CD4-positive, alpha-beta T cell (primary cell): ENCODE measurements at regions of chr4 and their contacts with region 1.

Region 1: GRCh38 chr4:78644744-78645330 is 93.3 kb downstream of the ANXA3 start:
- DNase-seq: peak; percentile 12 to 74 (median 34)
- ATAC-seq: peak; percentile 99
- H3K4me3 ChIP-seq: no peak overlapping the region
- H3K4me3 Mint-ChIP-seq: no peak overlapping the region
- H3K27ac ChIP-seq: no peak overlapping the region
- H3K27ac Mint-ChIP-seq: no peak overlapping the region
- H3K4me1 ChIP-seq: no peaks in the 10 kb centered on the region
- H3K4me1 Mint-ChIP-seq: peaks cover 5% of the 10 kb centered on the region
- H3K27me3 ChIP-seq: no peaks in the 10 kb centered on the region
- H3K27me3 Mint-ChIP-seq: no peaks in the 10 kb centered on the region
- CTCF ChIP-seq: peak; percentile 80

Region 2: GRCh38 chr4:78517050-78517652 is 127.7 kb before region 1 on chr4:
- CTCF ChIA-PET with region 1: no interaction called
- POLR2A ChIA-PET with region 1: no interaction called
- intact Hi-C with region 1: no loop called
- DNase-seq: peak in 2 of 14 experiments; percentile 3 to 7
- ATAC-seq: no peak
- H3K4me3 ChIP-seq: no peak overlapping the region
- H3K4me3 Mint-ChIP-seq: no peak overlapping the region
- H3K27ac ChIP-seq: no peak overlapping the region
- H3K27ac Mint-ChIP-seq: no peak overlapping the region
- H3K4me1 ChIP-seq: no peaks in the 10 kb centered on the region
- H3K4me1 Mint-ChIP-seq: no peaks in the 10 kb centered on the region
- H3K27me3 ChIP-seq: no peaks in the 10 kb centered on the region
- H3K27me3 Mint-ChIP-seq: no peaks in the 10 kb centered on the region
- CTCF ChIP-seq: peak; percentile 35

Region 3: GRCh38 chr4:78656968-78657445 is 12.2 kb after region 1 on chr4:
- CTCF ChIA-PET with region 1: interaction called, 17 read pairs
- POLR2A ChIA-PET with region 1: interaction called, 6 read pairs
- intact Hi-C with region 1: no loop called
- DNase-seq: peak in 5 of 14 experiments; percentile 3 to 43 (median 35)
- ATAC-seq: peak; percentile 54
- H3K4me3 ChIP-seq: peak overlapping the region; percentile 22
- H3K4me3 Mint-ChIP-seq: peak overlapping the region; percentile 64
- H3K27ac ChIP-seq: no peak overlapping the region
- H3K27ac Mint-ChIP-seq: peak overlapping the region; percentile 16
- H3K4me1 ChIP-seq: peaks cover 16% of the 10 kb centered on the region
- H3K4me1 Mint-ChIP-seq: peaks cover 45% of the 10 kb centered on the region
- H3K27me3 ChIP-seq: no peaks in the 10 kb centered on the region
- H3K27me3 Mint-ChIP-seq: no peaks in the 10 kb centered on the region
- CTCF ChIP-seq: no peak